ENCODE measurements at regions of chr14 and their contacts with region 1.

Region 1: DNA sequence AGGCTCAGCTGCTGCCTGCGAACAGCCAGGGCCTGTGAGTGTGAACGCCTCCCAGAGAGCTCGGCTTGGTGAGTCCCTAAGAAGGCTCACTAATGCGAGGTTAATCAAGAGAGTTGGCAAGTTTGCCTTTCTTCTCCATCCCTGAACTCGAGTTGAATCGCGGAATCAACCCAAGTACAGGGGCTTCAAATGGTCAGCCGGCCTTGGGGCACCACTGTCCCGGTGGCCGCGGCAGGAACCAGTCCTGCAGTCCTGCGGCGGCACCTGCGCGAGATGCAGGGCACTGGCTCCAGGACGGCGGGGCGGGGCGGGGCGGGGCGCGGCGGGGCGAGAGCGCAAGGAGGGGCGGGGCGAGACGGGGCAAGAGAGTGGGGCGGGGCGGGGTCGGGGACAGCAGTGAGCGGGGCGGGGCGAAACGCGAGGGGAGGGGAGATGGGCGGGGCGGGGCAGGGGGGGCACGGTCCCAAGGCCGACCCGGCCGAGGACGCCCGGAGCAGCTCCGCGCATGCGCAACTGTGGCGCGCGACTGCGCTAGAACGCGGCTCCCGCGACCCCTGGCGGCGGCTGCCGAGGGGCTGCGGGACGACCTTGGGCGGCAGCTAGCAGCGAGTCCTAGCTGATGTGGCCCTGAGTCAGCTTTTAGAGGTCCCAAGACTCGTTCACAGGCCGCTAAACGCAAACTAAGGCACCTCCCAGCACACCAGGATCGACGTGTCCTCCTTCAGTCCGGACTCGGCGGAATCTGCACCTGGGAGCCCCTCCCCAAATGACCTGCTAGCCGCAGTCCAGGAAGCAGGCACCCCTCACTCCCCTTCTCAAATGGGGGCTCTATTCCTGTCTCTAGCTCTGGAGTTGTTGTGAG is 58.0 kb downstream of the TTC7B start:
- DNase-seq: peak; percentile 95
- H3K4me3 ChIP-seq: peak overlapping the region; percentile 26 to 50 (median 46)
- H3K27ac ChIP-seq: peak overlapping the region; percentile 90 to 96 (median 92)
- H3K4me1 ChIP-seq: peaks cover 0 to 52% (median 36%) of the 10 kb centered on the region in 4 donors
- H3K27me3 ChIP-seq: no peaks in the 10 kb centered on the region
- CTCF ChIP-seq: peak; percentile 75 to 91 (median 85)
- EP300 ChIP-seq: no peak
- POLR2A ChIP-seq: peak in 1 of 2 donors; percentile 35

Region 2: GRCh38 chr14:90815822-90816700 is 57.8 kb after region 1 on chr14 and contains the start of gene TTC7B:
- intact Hi-C with region 1: loop called (anchors 2 kb)
- DNase-seq: peak; percentile 73
- H3K4me3 ChIP-seq: peak within 1 kb of the TSS; percentile 76 to 84 (median 80)
- H3K27ac ChIP-seq: peak within 1 kb of the TSS in 3 of 4 donors; percentile 55 to 66 (median 64)
- H3K4me1 ChIP-seq: peaks cover 0 to 20% (median 17%) of the 10 kb centered on the region in 4 donors
- H3K27me3 ChIP-seq: no peaks in the 10 kb centered on the region
- CTCF ChIP-seq: no peak
- EP300 ChIP-seq: no peak
- POLR2A ChIP-seq: no peak
- total RNA-seq, gene TTC7B: 46.8 to 70.9 (median 61.2) TPM

Region 3: DNA sequence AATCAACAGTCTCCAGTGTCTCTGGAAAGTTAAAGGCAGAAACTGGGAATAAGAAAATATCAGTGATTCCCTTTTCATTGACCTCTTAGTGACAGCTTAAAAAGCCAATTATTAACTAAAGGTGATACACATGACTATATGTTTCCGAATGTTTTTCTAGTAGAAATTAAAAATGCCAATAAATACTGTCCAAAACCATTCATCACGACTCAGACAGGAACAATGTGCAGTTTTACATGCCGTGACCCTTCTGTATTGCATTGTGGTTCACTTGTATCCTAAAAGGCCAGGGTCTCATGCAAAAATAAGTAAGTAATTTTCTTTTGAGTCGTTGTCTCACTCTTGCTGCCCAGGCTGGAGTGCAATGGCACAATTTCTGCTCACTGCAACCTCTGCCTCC is 163.9 kb after region 1 on chr14:
- intact Hi-C with region 1: no loop called
- DNase-seq: no peak
- H3K4me3 ChIP-seq: no peak overlapping the region
- H3K27ac ChIP-seq: no peak overlapping the region
- H3K4me1 ChIP-seq: peaks cover 0 to 8% (median 6%) of the 10 kb centered on the region in 4 donors
- H3K27me3 ChIP-seq: no peaks in the 10 kb centered on the region
- CTCF ChIP-seq: no peak
- EP300 ChIP-seq: no peak
- POLR2A ChIP-seq: no peak

Measured in sigmoid colon (tissue), 7 donors.